AG04449 (cell line): ENCODE measurements at regions of chr11 and their contacts with region 1.

Region 1: DNA sequence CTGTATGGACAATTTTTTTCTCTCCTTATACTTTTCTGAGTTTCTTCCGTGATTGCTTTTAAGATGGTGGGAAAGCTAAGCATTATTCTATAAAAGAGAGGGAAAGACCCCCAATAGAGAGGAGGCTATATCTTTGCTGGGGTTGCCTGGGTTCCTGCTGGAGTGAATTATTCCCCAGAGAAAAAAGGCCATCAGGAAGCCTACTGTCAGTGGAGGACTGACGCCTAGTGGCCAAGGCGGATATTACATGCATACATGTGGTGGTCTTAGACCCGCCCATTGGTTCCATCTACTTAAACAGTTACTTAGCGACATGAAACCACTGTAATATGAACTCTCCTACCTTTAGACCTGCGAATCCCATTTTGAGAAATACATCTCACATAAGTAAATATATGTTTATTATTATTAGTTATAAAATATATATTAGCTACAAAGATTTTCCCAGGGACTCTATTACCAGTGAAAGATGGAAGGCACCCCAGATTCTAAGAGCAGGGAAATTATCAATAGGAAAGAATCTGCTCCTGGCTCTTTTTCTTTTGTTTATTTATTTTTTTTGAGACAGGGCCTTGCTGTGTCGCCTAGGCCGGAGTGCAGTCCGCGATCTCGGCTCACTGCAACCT is 15.7 kb upstream of the PGA3 start:
- DNase-seq: no peak
- H3K4me3 ChIP-seq: no peak overlapping the region
- CTCF ChIP-seq: peak; percentile 86

Region 2: DNA sequence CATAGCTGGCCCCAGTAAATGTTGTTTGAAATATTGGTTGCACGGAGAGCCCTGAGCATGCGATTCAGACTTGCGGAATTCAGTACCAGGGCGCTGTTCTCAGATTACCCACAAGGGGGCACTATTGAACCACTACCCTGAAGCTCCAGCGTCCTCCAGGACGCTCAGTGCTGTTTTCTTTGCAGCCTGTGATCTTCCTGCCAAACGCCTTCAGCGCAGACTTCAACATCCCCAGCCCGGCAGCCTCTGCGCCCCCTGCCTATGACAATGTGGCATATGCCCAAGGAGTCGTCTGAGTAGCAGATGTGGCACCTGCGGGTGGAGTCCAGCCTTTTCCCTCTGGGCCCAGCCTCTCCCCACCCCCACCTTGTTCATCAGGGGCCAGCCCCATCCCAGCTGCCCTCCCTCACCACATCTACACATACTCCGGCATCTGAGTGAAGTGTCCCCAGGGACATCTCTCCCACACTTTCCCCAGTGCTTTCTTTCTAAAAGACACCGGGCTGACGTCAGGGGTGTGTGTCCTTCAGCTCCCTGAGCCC is 412.1 kb before region 1 on chr11:
- CTCF ChIA-PET with region 1: interaction called, 23 read pairs
- POLR2A ChIA-PET with region 1: no interaction called
- DNase-seq: peak; percentile 60
- H3K4me3 ChIP-seq: no peak overlapping the region
- CTCF ChIP-seq: peak; percentile 75

Region 3: GRCh38 chr11:60781286-60781980 is 406.2 kb before region 1 on chr11:
- CTCF ChIA-PET with region 1: interaction called, 23 read pairs
- POLR2A ChIA-PET with region 1: no interaction called
- DNase-seq: no peak
- H3K4me3 ChIP-seq: no peak overlapping the region
- CTCF ChIP-seq: no peak

Region 4: DNA sequence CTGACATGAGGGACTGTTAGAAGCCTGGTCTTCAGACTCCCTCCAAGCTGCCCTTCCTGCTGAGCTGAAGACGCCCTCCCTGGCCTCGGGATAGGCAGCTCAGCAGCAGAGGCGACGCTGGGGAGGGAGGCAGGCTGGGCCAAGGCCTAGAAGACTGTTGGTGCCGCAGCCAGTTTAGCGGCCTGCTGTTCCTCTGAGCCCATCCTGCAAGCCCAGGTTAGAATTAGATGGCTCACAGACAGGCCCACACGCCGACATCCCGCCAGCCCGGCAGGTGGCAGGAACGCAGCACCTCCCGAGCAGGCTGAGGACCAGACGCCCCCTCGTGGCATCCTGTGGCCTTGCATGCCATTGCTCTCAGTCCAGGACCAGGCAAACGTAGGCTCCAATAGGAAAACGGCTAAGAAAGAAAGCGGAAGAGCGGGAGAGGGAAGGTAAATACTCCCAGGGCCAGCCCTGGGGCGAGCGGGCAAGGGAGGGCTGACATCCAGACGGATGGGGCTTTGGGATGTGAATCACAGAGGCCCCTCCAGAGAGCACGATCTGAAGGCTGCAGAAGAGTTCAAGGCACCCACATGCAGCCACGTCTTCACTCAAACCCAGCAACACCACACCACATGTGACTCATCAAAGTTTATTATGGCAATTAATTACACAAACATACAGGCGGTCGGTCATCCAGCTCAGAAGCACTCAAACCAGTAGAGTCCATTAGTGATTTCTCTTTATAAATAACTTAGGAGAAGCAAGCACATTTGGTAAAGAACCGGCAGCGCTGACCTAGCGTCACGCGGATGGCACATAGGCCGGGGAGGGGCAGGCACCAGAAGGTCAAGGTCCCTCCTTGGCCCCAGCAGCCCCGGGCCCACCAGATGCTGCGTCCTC is 57.7 kb before region 1 on chr11:
- CTCF ChIA-PET with region 1: interaction called, 10 read pairs
- POLR2A ChIA-PET with region 1: no interaction called
- DNase-seq: peak; percentile 65
- H3K4me3 ChIP-seq: peak overlapping the region; percentile 36
- CTCF ChIP-seq: peak; percentile 100

Region 5: DNA sequence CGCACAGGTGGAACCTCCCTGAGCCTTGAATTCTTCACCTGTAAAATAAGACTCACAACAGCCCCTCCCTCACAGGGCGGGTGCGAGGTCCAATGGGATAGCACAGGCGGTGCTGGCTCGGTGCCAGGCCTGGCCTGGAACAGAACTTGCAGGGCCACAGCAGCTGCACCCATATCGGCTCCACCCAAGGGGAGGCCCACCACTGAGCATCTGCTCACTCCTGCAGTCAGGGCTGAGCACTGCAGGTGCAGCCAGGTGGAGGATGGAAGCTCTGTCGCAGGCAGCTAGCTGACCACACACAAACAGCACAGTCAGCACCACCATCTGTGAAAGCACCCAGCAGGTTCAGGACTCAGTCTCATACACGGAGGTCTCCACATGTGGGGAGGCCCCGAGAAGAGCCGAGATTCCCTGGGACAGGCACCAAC is 46.0 kb before region 1 on chr11:
- CTCF ChIA-PET with region 1: interaction called, 16 read pairs
- POLR2A ChIA-PET with region 1: no interaction called
- DNase-seq: no peak
- H3K4me3 ChIP-seq: no peak overlapping the region
- CTCF ChIP-seq: no peak

Region 6: DNA sequence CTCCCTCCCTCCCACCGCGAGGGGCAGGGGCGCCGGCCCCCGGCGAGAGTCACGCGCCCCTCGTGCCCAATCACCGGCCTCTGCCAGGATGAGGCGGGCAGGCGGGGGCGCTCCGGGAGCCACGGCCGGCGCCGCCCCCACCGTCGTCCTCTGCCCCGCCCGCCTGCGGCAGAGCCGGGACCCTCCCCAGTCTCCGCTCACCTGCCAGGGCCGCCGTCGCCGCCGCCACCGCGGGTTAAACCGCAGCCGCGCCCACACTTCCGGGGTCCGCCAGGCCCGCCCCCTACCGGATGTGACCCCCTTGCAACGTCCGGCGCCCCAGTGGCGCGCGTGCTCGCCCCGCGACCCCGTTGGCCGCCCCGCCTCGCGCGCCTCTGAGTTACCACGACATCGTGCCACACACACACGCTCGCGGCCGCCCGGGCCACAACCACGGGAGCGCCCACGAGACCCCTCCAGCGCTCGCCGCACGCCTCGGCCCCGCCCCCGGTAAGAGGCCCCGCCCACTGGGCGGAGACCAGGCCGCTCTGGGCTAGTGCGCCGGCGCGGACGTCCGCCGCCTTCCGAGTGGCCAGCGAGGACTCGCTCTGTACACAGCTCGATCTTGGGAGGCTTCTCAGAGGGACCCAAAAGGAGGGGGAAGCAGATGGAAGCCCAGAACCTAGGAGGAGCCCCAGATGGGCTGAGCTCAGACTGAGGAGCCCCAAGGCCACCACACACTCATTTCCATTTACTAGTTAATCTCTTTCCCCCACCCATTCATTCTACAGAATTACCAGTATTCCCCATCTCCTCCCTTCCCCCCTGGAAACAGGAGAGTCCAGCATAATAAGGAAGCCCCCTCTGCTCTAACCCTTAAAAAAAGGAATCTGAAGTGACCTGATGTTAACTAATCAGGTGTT is 26.2 kb before region 1 on chr11 and contains the start of gene VPS37C:
- CTCF ChIA-PET with region 1: no interaction called
- POLR2A ChIA-PET with region 1: no interaction called
- DNase-seq: no peak
- H3K4me3 ChIP-seq: peak within 1 kb of the TSS; percentile 81
- CTCF ChIP-seq: peak; percentile 9

Region 7: GRCh38 chr11:61173456-61173855 is 14.2 kb before region 1 on chr11:
- CTCF ChIA-PET with region 1: interaction called, 26 read pairs
- POLR2A ChIA-PET with region 1: no interaction called
- DNase-seq: no peak
- H3K4me3 ChIP-seq: no peak overlapping the region
- CTCF ChIP-seq: no peak